ENCODE measurements at regions of chr20 and their contacts with region 1.

Region 1: DNA sequence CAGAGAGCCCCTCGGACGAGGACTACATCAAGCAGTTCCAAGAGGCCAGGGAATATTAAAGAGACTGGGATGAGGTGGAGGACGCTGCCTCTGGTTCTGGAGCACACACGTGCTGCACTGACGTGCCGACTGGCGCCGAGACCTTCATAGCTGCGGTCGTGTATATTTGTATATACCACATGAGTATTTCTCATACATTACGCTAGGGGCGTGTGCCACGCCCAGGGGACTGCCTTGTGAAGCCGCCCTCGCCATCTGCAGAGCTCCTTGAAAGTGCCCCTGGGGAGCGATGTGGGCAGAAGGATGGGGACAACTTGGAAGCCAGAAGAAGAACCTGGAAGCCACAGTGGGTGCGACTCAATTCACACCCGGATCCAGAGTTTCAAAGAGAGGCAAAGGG is 78.3 kb downstream of the ISM1 start:
- DNase-seq: no peak
- H3K4me3 ChIP-seq: no peak overlapping the region
- H3K27ac ChIP-seq: no peak overlapping the region
- H3K4me1 ChIP-seq: no peaks in the 10 kb centered on the region
- H3K27me3 ChIP-seq: no peaks in the 10 kb centered on the region
- CTCF ChIP-seq: no peak
- POLR2A ChIP-seq: no peak

Region 2: DNA sequence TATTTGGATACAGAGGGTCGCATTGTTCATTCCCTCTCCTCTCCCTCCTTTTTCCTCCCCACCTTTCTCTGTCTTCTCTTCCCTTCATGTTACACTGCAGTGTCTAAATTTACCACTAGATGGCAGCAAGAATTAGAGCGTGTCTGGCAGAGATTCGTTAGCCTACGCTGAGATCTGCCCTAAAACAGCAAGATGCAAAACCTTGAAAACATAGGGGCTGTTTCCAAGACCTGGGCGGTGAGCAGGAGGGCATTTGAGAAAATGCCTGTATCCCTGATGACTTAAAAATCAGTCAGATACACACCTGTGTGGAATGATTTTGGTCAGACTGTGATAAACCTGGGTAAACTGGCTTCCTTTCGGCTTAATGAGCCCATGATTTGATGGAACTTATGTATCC is 179.8 kb before region 1 on chr20:
- intact Hi-C with region 1: loop called (anchors 10 kb)
- DNase-seq: peak; percentile 31 to 38
- H3K4me3 ChIP-seq: no peak overlapping the region
- H3K27ac ChIP-seq: peak overlapping the region; percentile 64 to 73 (median 72)
- H3K4me1 ChIP-seq: peaks cover 52 to 55% of the 10 kb centered on the region in 2 donors
- H3K27me3 ChIP-seq: no peaks in the 10 kb centered on the region
- CTCF ChIP-seq: peak; percentile 62 to 99 (median 90)
- POLR2A ChIP-seq: no peak

Region 3: DNA sequence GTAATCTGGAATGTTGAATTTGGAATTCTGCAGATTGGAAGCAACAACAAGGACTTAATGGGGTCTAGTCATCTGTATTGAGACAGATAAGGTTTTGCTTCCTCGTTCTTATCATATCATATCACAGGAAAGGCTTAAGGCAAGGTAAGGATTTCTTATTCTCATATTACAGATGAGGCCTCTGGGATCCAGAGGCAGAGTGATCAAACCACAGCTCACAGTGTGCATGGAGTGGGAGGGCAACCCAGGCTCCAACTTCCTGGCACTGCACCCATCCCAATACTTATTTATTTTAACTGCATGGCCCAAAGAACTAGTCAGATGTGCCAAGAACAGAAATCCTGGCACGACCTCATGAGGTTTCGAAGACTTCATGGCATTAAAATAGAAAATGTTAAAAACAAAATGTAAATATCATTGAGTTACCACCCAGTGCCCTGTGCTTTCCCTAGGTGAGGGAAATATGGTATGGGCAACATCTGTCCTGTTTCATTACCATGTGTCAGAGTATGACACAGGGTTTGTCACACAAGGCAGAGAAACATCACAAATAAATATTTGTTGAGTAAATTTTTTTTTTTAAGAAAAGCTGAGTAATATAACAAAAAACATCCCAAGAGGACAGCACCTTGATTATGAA is 113.5 kb after region 1 on chr20:
- intact Hi-C with region 1: no loop called
- DNase-seq: peak; percentile 7 to 46
- H3K4me3 ChIP-seq: no peak overlapping the region
- H3K27ac ChIP-seq: no peak overlapping the region
- H3K4me1 ChIP-seq: peaks cover 0 to 8% of the 10 kb centered on the region in 2 donors
- H3K27me3 ChIP-seq: no peaks in the 10 kb centered on the region
- CTCF ChIP-seq: no peak
- POLR2A ChIP-seq: no peak